ENCODE measurements at regions of chr1 and their contacts with region 1.

Region 1: GRCh38 chr1:153727463-153728304 is at the start of gene INTS3:
- DNase-seq: peak; percentile 97 to 100 (median 100)
- ATAC-seq: peak; percentile 98 to 100 (median 98)
- H3K4me3 ChIP-seq: peak within 1 kb of the TSS; percentile 82 to 92
- H3K4me3 Mint-ChIP-seq: peak within 1 kb of the TSS; percentile 91 to 95 (median 91)
- H3K27ac ChIP-seq: peak within 1 kb of the TSS; percentile 95
- H3K27ac Mint-ChIP-seq: peak within 1 kb of the TSS; percentile 98 to 99
- H3K4me1 ChIP-seq: peaks cover 8 to 26% of the 10 kb centered on the region in 2 experiments
- H3K4me1 Mint-ChIP-seq: peaks cover 24 to 32% (median 31%) of the 10 kb centered on the region in 3 donors
- H3K27me3 ChIP-seq: no peaks in the 10 kb centered on the region
- H3K27me3 Mint-ChIP-seq: no peaks in the 10 kb centered on the region
- total RNA-seq, gene INTS3: 45.9 to 57.7 (median 48.5) TPM

Region 2: DNA sequence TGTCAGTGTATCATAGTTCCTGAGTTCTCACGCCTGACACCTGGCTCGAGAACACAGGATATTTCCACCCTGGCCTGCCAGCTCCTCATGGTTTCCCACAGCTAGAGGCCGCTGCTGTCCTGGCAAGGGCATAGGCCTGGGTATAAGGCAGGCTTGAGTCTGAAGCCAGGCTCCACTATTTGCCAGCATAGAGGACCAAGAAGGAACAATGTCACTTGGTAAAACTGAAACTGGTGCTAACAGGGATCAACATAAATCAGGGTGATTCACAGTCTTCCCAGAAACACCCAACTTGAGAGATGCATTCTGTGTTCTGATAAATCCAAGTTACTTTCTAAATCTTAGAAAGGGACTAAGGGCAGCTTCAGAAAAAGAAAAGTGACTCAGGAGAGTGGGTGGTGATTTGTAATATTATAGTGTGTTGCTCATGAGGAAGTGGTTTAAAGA is 155.1 kb before region 1 on chr1:
- CTCF ChIA-PET with region 1: no interaction called
- POLR2A ChIA-PET with region 1: interaction called in 1 of 2 experiments, 11 read pairs
- DNase-seq: peak in 30 of 35 experiments; percentile 12 to 60 (median 34)
- ATAC-seq: peak; percentile 68 to 87 (median 76)
- H3K4me3 ChIP-seq: no peak overlapping the region
- H3K4me3 Mint-ChIP-seq: no peak overlapping the region
- H3K27ac ChIP-seq: no peak overlapping the region
- H3K27ac Mint-ChIP-seq: peak overlapping the region; percentile 34 to 43
- H3K4me1 ChIP-seq: peaks cover 0 to 13% of the 10 kb centered on the region in 2 experiments
- H3K4me1 Mint-ChIP-seq: peaks cover 12 to 24% (median 22%) of the 10 kb centered on the region in 3 donors
- H3K27me3 ChIP-seq: peaks cover 0 to 22% of the 10 kb centered on the region in 2 experiments
- H3K27me3 Mint-ChIP-seq: peaks cover 5 to 10% of the 10 kb centered on the region in 2 donors

Region 3: DNA sequence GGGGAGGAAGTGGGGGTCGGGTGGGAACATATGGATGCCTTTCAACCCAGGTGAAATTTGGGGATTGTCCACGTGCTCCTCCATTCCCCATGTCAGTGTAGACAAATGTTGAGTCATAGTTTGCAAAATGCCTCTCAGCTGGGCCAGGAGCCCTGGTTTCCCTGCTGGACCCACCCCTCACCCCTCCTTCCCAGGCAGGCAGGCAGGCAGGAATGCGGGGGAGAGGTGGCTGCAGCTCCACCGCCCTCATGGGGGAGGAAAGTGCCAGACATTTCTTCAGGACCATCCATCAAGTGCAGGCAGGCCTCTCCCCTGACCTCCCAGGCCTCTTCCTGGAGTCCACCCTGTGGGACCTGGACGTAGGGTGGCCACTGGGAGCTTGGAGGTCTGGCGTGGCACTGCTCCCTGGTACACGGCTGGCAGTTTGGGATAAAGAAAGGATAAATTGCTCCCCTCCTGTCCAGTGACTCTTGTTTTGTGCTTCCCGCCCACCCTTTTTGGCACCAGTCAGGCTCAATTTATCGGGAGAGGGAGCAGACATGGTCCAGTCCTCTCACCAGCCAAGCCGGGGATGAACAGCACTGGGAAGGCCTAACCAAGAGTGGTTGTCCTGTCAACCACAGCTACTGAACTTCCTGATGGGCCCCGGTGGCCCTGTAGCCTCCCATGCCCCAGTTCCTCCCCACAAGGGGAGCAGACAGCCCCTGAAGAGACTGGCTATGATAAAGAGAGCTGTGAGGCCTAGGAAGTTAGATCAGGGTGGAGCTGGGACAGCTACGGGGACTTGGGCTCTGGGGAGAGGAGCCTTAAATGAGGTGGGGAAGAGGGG is 30.3 kb before region 1 on chr1:
- CTCF ChIA-PET with region 1: no interaction called
- POLR2A ChIA-PET with region 1: no interaction called
- DNase-seq: no peak
- ATAC-seq: no peak
- H3K4me3 ChIP-seq: no peak overlapping the region
- H3K4me3 Mint-ChIP-seq: no peak overlapping the region
- H3K27ac ChIP-seq: no peak overlapping the region
- H3K27ac Mint-ChIP-seq: no peak overlapping the region
- H3K4me1 ChIP-seq: peaks cover 0 to 5% of the 10 kb centered on the region in 2 experiments
- H3K4me1 Mint-ChIP-seq: no peaks in the 10 kb centered on the region
- H3K27me3 ChIP-seq: peaks cover 0 to 17% of the 10 kb centered on the region in 2 experiments
- H3K27me3 Mint-ChIP-seq: peaks cover 0 to 4% of the 10 kb centered on the region in 2 donors

Measured in T-cell (primary cell).